ENCODE measurements at regions of chr4 and their contacts with region 1.

Region 1: DNA sequence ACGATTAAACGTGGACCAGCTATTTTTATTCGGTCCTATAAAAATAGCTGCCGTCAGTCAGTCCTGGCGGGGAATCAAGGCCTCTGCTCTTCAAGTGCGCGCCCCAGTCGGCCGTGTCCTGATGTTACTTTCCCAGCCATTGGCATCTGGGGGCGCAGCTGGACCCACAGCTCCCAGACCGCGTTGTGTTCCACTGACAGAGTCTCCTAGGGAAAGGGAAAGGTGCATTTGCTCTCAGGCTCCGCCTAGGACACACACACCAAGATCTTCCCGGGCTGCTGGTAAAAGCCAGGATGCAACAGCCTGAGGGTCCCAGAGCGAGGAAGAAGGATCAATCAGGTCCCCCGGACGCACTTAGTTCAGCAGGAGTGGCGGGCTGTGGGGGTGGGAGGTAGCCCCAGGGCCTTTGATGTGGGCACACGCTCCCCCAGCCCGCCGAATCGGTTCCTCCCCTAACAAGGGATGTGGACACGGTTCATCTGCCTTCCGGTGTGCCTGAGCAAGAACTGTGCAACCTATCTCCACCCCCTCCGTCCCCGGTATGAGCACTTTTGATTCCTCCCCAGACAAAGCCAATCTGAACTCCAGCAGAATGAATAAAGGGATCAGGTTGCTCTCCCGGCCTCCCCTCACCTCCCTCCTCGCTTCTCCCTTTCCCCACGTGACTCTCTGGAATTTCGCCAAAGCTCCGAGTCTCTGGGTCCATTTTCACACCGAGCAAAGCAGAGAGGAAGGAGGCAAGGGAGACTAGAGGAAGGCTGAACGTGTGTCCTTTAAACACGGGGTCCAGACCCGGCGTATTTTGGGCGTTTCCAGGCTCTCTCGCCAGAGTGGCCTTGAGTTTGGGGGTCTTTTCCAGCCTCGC is 626 bp upstream of the FRAS1 start:
- DNase-seq: peak; percentile 74
- H3K4me3 Mint-ChIP-seq: peak overlapping the region; percentile 88
- H3K27ac Mint-ChIP-seq: peak overlapping the region; percentile 74
- H3K4me1 Mint-ChIP-seq: no peaks in the 10 kb centered on the region
- H3K27me3 Mint-ChIP-seq: no peaks in the 10 kb centered on the region
- CTCF ChIP-seq: no peak

Region 2: DNA sequence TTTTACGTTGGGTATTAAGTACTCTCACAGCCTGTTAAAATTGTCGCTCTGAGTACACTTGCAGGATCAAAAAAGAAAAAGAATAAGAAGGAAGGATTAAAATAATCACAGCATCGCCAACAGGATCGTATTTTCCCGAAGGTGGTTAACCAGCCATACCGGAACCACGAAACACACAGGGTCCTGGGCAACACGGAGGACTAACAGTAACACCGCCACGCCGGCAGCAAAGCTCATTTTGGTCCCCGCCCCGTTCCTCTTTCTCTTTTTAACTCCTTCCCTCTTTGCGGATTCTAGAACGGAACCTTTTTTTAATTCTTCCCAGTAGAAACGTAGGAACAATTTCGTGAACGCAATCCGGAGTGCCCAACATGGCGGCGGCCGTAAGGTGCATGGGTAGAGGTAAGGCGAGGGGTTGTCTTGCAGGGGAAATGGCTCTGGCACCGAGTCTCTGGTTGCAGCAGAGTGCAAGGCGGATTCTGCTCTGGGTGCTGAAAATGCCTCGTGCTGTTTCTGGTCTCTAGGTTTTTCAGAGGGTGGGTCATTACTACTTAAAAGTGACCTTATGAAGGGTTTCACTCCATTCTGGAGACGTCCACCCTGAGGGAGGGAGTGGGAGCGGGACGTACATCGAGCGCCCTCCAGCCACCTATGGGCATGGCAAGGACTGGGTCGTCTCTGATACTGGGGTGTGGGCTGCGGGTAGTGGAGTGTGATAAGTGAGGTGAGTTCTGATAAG is 193.8 kb before region 1 on chr4 and contains the start of gene MRPL1:
- CTCF ChIA-PET with region 1: no interaction called
- intact Hi-C with region 1: no loop called
- DNase-seq: peak; percentile 80
- H3K4me3 Mint-ChIP-seq: peak within 1 kb of the TSS; percentile 95
- H3K27ac Mint-ChIP-seq: peak within 1 kb of the TSS; percentile 98
- H3K4me1 Mint-ChIP-seq: peaks cover 10% of the 10 kb centered on the region
- H3K27me3 Mint-ChIP-seq: no peaks in the 10 kb centered on the region
- CTCF ChIP-seq: no peak
- total RNA-seq, gene MRPL1: 24.1 and 29.3 TPM in 2 replicates

Region 3: GRCh38 chr4:77952457-77952856 is 104.0 kb before region 1 on chr4:
- CTCF ChIA-PET with region 1: no interaction called
- intact Hi-C with region 1: no loop called
- DNase-seq: no peak
- H3K4me3 Mint-ChIP-seq: no peak overlapping the region
- H3K27ac Mint-ChIP-seq: no peak overlapping the region
- H3K4me1 Mint-ChIP-seq: no peaks in the 10 kb centered on the region
- H3K27me3 Mint-ChIP-seq: no peaks in the 10 kb centered on the region
- CTCF ChIP-seq: no peak

Region 4: GRCh38 chr4:78174891-78175290 is 118.4 kb after region 1 on chr4:
- CTCF ChIA-PET with region 1: interaction called, 3 read pairs
- intact Hi-C with region 1: loop called (anchors 5 kb)
- DNase-seq: no peak
- H3K4me3 Mint-ChIP-seq: no peak overlapping the region
- H3K27ac Mint-ChIP-seq: peak overlapping the region; percentile 52
- H3K4me1 Mint-ChIP-seq: peaks cover 38% of the 10 kb centered on the region
- H3K27me3 Mint-ChIP-seq: no peaks in the 10 kb centered on the region
- CTCF ChIP-seq: no peak

Region 5: GRCh38 chr4:78379991-78380729 is 323.7 kb after region 1 on chr4:
- CTCF ChIA-PET with region 1: interaction called, 16 read pairs
- intact Hi-C with region 1: loop called (anchors 5 kb)
- DNase-seq: peak; percentile 61
- H3K4me3 Mint-ChIP-seq: peak overlapping the region; percentile 56
- H3K27ac Mint-ChIP-seq: peak overlapping the region; percentile 85
- H3K4me1 Mint-ChIP-seq: peaks cover 23% of the 10 kb centered on the region
- H3K27me3 Mint-ChIP-seq: no peaks in the 10 kb centered on the region
- CTCF ChIP-seq: no peak

Region 6: GRCh38 chr4:78439328-78439727 is 382.8 kb after region 1 on chr4:
- CTCF ChIA-PET with region 1: interaction called, 12 read pairs
- intact Hi-C with region 1: no loop called
- DNase-seq: peak; percentile 6
- H3K4me3 Mint-ChIP-seq: no peak overlapping the region
- H3K27ac Mint-ChIP-seq: no peak overlapping the region
- H3K4me1 Mint-ChIP-seq: peaks cover 15% of the 10 kb centered on the region
- H3K27me3 Mint-ChIP-seq: no peaks in the 10 kb centered on the region
- CTCF ChIP-seq: no peak

Region 7: GRCh38 chr4:78534286-78534955 is 477.9 kb after region 1 on chr4:
- CTCF ChIA-PET with region 1: no interaction called
- intact Hi-C with region 1: loop called (anchors 5 kb)
- DNase-seq: peak; percentile 74
- H3K4me3 Mint-ChIP-seq: peak overlapping the region; percentile 15
- H3K27ac Mint-ChIP-seq: peak overlapping the region; percentile 100
- H3K4me1 Mint-ChIP-seq: peaks cover 52% of the 10 kb centered on the region
- H3K27me3 Mint-ChIP-seq: no peaks in the 10 kb centered on the region
- CTCF ChIP-seq: no peak